OCI-LY7 (cell line): ENCODE measurements at regions of chr2 and their contacts with region 1.

Region 1: GRCh38 chr2:61694312-61695274 is 156.4 kb upstream of the XPO1 start:
- DNase-seq: peak; percentile 94
- H3K4me3 ChIP-seq: peak overlapping the region; percentile 68
- H3K27ac ChIP-seq: peak overlapping the region; percentile 18
- H3K4me1 ChIP-seq: peaks cover 8% of the 10 kb centered on the region
- CTCF ChIP-seq: peak; percentile 80

Region 2: DNA sequence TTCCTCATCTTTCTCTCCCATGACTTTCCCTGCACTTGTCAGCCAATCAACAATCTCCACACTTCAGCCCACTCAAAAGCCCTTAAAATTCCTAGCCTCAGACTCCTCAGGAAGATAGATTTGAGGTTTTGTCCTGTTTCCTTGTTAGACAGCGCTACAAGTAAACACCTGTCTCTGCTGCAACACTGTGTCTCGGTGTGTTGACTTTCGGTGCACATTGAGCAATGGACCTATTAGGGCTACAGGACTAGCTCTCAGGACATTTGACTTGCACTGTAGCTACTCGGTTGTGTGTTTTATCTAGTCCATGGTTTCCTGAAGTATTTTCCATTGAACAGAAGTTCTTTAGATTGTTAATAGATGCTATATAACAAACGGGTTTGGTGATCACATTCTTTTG is 15.5 kb before region 1 on chr2:
- CTCF ChIA-PET with region 1: no interaction called
- POLR2A ChIA-PET with region 1: no interaction called
- intact Hi-C with region 1: no loop called
- DNase-seq: no peak
- H3K4me3 ChIP-seq: no peak overlapping the region
- H3K27ac ChIP-seq: no peak overlapping the region
- H3K4me1 ChIP-seq: no peaks in the 10 kb centered on the region
- CTCF ChIP-seq: no peak

Region 3: GRCh38 chr2:61718965-61719364 is 24.4 kb after region 1 on chr2:
- CTCF ChIA-PET with region 1: no interaction called
- POLR2A ChIA-PET with region 1: no interaction called
- intact Hi-C with region 1: no loop called
- DNase-seq: no peak
- H3K4me3 ChIP-seq: no peak overlapping the region
- H3K27ac ChIP-seq: no peak overlapping the region
- H3K4me1 ChIP-seq: no peaks in the 10 kb centered on the region
- CTCF ChIP-seq: no peak

Region 4: GRCh38 chr2:61789807-61790602 is 95.4 kb after region 1 on chr2:
- CTCF ChIA-PET with region 1: no interaction called
- POLR2A ChIA-PET with region 1: no interaction called
- intact Hi-C with region 1: loop called (anchors 1 kb)
- DNase-seq: no peak
- H3K4me3 ChIP-seq: no peak overlapping the region
- H3K27ac ChIP-seq: no peak overlapping the region
- H3K4me1 ChIP-seq: no peaks in the 10 kb centered on the region
- CTCF ChIP-seq: no peak

Region 5: DNA sequence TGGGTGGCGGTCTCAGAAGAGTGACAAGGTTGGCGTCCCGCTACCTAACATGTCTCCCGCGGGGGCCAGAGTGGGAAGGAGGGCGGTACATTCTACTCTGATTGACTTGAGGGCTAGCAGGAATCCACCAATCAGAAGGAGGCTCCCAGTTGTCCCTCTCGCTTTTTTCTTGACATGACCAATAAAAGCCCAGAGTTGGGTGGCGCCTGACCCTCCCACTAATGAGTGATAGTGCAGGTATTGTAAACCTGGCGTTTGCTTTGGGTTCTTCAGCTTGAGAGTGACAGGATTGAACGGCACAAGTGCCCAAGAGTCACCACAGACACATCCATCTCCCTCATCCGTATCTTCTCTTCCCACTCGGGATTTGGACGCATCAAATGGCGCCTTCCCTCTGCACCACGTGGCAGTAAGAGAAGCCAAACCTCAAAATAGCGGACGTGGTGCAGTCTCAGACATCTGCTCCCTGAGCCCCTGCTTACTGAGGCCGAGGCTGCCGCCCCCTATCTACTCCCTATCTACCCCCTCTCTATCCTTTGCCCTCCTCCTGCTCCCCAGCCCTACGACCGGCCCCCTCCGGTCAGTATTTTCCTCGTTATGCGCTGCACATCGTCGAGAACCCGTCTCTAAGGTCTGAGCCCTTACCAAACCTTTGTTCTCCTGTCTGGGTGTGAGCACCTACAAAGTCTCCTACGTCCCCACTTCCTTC is 160.0 kb after region 1 on chr2:
- CTCF ChIA-PET with region 1: no interaction called
- POLR2A ChIA-PET with region 1: no interaction called
- intact Hi-C with region 1: loop called (anchors 1 kb)
- DNase-seq: peak; percentile 97
- H3K4me3 ChIP-seq: peak overlapping the region; percentile 74
- H3K27ac ChIP-seq: peak overlapping the region; percentile 59
- H3K4me1 ChIP-seq: peaks cover 20% of the 10 kb centered on the region
- CTCF ChIP-seq: no peak

Region 6: DNA sequence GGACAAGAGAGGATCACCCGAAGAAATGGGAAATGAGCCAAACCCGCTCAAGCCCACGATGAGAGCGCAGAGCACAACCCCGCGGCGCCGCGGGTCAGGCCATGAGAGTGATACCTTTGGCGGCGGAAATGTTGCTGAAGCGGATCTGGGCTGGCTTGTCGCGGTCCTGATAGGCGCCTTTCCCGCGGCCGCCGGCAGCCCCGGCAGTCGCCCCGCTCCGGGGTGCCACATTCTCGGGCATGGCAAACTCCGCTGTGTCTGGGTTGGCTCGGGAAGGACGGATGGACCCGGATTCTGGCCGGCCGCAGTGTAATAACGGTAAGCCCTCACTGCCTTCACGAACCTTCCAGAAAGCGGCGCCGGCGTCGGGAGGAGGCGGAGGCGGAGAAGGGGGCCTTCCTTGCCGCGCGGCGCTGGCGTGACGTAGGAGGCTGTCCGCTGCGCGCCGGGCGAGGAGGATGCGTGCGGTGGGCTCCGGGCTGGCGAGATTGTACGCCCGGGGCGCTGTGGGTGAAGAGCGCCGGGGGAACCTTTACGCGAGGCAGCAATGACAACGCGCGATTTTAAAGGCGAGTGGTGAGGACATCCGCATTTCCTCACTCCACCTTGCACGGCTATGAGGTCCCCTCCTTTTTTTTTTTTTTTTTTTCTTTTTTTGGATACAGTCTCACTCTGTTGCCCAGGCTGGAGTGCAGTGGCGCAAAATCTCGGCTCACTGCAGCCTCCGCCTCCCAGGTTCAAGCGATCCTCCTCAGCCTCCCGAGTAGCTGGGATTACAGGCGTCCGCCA is 193.9 kb after region 1 on chr2 and contains the start of gene CCT4:
- CTCF ChIA-PET with region 1: no interaction called
- POLR2A ChIA-PET with region 1: no interaction called
- intact Hi-C with region 1: loop called (anchors 1 kb)
- DNase-seq: peak; percentile 90
- H3K4me3 ChIP-seq: peak within 1 kb of the TSS; percentile 88
- H3K27ac ChIP-seq: peak within 1 kb of the TSS; percentile 64
- H3K4me1 ChIP-seq: peaks cover 22% of the 10 kb centered on the region
- CTCF ChIP-seq: no peak
- total RNA-seq, gene CCT4: 144 and 196 TPM in 2 replicates